GM18951 (cell line): ENCODE measurements at regions of chr13 and their contacts with region 1.

Region 1: GRCh38 chr13:44435142-44435982 is 61.7 kb downstream of the SERP2 start:
- POLR2A ChIP-seq: no peak

Region 2: GRCh38 chr13:43905435-43906031 is 529.8 kb before region 1 on chr13:
- in situ Hi-C with region 1: loop called (anchors 10 kb)
- POLR2A ChIP-seq: no peak

Region 3: DNA sequence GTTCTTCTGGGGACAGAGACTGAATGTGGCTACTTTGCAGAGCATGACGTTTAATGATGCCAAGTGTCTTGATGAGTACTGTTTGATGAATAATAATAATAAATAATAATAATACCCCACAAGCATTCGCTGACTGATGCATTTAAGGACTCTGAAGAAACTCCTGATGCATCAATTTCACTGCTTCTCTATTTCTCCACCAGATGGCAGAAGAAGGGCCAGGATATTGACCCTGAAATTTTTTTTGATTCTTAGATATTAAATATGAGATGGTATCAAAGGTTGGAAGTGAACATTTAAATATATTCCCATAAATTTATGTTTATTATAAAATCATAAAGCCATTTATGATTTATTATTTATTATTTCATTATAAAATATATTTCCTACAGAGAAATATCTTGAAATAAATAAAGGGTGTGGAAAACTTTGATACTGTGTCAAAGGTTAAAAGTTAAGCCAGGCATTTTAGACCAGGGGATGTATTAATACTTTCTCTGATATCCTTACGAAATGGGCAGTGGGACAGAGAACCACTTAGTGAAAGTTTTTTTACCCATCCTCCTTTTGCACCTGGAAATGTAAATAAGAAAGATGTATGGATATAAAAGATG is 384.8 kb before region 1 on chr13:
- in situ Hi-C with region 1: loop called (anchors 5 kb)
- POLR2A ChIP-seq: no peak

Region 4: DNA sequence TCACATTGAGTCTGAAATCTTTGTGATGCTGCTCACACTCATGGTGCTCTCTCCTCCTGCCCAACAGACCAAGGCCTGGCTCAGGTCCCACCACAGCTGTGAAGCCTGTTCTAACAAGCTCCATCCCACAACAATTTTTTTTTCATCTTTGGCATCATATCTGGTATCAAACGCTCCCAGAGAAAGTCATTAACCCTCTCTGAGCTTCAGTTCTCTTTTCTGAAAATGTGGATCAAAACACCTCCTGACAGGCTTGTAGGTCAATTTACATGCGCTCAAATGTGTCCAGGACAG is 331.2 kb before region 1 on chr13:
- in situ Hi-C with region 1: no loop called
- POLR2A ChIP-seq: no peak